Activated CD4-positive, alpha-beta memory T cell treated with anti-CD3 and anti-CD28 coated beads for 36 hours (primary cell): ENCODE measurements at regions of chr11 and their contacts with region 1.

Region 1: DNA sequence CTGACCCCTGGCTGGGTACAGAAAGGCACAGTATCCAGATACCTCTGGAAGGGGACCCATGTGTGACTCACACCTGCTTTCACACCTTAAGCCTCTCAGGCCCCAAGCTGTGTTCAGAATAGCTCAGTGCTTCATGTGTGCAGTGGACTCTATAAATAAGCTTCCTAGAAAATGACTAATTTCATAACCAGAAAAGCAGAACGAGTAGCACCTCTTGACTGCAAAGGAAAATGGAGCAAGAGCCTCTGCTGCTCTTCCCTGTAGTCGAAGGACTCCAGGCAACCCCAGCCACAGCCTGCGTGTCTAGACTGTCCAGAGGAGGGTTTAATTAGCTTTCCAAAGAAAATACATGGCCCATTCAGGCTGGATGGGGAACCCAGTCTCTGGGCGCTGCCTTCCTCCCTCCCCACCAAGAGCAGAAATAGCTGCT is 23.1 kb downstream of the PTPN5 start:
- DNase-seq: peak; percentile 42
- H3K4me3 Mint-ChIP-seq: no peak overlapping the region
- H3K27ac Mint-ChIP-seq: peak overlapping the region; percentile 9
- H3K4me1 Mint-ChIP-seq: peaks cover 20% of the 10 kb centered on the region
- H3K27me3 Mint-ChIP-seq: peaks cover 12% of the 10 kb centered on the region

Region 2: DNA sequence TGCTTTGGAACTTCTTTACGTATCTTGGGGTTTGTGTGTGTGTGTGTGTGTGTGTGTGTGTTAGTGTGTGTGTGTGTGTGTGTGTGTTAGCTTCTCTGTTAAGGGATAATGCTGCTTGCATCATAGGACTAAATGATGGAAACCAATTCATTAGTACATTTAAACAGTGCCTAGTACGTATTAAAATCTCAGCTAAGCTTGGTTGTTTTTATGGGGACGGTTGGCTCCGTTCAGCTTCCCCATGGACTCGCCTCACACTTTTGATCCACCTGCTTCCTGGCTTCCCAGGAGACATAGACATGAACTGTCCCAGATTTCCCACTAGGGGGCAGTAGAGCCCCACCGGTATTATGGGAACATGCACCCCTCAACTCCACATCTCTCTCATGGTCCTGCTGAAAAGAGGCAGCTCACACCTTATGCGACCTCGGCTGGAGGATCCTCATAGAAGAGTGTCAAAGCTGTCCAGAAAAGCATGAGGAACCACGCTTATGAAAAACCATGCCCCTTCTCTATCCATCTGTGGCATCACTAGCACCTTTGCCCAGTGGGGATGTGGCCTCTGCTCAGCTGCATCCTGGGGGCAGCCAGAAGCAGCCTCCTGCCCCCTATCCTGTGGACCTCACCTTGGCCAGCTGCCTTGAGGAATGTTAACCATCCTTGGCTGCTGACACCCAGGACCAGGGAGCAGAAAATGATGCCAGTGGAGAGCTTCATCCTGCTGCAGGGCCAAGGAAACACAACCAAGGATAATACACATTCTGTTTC is 652.9 kb before region 1 on chr11:
- CTCF ChIA-PET with region 1: interaction called, 20 read pairs
- POLR2A ChIA-PET with region 1: no interaction called
- intact Hi-C with region 1: loop called (anchors 1 kb)
- DNase-seq: peak; percentile 70
- H3K4me3 Mint-ChIP-seq: no peak overlapping the region
- H3K27ac Mint-ChIP-seq: no peak overlapping the region
- H3K4me1 Mint-ChIP-seq: no peaks in the 10 kb centered on the region
- H3K27me3 Mint-ChIP-seq: peaks cover 10% of the 10 kb centered on the region

Region 3: GRCh38 chr11:18171377-18172000 is 597.0 kb before region 1 on chr11:
- CTCF ChIA-PET with region 1: no interaction called
- POLR2A ChIA-PET with region 1: no interaction called
- intact Hi-C with region 1: loop called (anchors 1 kb)
- DNase-seq: peak; percentile 35
- H3K4me3 Mint-ChIP-seq: no peak overlapping the region
- H3K27ac Mint-ChIP-seq: no peak overlapping the region
- H3K4me1 Mint-ChIP-seq: no peaks in the 10 kb centered on the region
- H3K27me3 Mint-ChIP-seq: peaks cover 19% of the 10 kb centered on the region

Region 4: GRCh38 chr11:18540207-18541009 is 228.1 kb before region 1 on chr11:
- CTCF ChIA-PET with region 1: interaction called, 17 read pairs
- POLR2A ChIA-PET with region 1: no interaction called
- intact Hi-C with region 1: loop called (anchors 1 kb)
- DNase-seq: no peak
- H3K4me3 Mint-ChIP-seq: no peak overlapping the region
- H3K27ac Mint-ChIP-seq: no peak overlapping the region
- H3K4me1 Mint-ChIP-seq: peaks cover 5% of the 10 kb centered on the region
- H3K27me3 Mint-ChIP-seq: no peaks in the 10 kb centered on the region

Region 5: GRCh38 chr11:18958221-18958910 is 189.9 kb after region 1 on chr11:
- CTCF ChIA-PET with region 1: no interaction called
- POLR2A ChIA-PET with region 1: no interaction called
- intact Hi-C with region 1: no loop called
- DNase-seq: no peak
- H3K4me3 Mint-ChIP-seq: no peak overlapping the region
- H3K27ac Mint-ChIP-seq: no peak overlapping the region
- H3K4me1 Mint-ChIP-seq: no peaks in the 10 kb centered on the region
- H3K27me3 Mint-ChIP-seq: peaks cover 6% of the 10 kb centered on the region